B cell (primary cell): ENCODE measurements at regions of chrX and their contacts with region 1.

Region 1: DNA sequence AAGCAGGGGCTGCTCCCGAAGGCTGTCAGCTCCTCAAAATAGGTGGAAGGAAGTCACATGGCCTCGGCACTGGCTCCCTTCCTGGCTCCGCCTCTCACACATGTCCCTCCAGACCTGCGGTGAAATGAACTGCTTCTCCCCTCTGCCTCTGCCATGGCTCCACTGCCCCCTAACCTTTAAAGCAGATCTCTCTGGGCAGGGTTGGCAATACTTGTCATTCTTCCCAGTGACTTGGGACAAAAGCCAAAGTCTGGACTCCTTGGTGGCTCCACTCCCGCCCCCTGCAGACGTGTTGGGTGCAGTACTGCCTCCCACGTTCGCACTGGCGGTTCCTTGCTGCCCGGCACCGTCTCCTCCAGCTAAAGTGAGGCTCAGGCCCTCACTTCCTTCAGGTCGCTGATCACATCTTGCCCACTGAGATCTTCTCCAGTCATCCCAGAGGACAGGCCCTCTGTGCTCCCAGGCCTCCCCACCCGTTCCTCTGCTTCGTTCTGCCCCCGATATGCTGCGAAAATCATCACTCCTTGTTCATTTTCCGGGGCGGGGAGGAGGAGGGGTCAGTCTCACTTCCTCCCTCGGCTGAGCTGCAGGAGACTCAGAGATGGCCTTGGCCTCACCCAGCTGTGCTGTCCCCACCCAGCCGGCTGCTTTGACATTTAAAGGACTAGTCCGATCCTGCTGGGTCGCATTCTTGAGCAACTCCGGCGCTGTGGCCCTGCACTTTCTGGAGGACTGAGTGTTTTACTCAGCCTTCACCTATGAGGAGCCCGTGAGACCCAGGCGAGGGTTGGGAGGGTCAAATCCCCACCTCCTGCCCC is 97.4 kb downstream of the PHKA2 start:
- DNase-seq: peak; percentile 69
- ATAC-seq: peak; percentile 83
- H3K4me3 ChIP-seq: peak overlapping the region; percentile 49 to 65 (median 58)
- H3K4me3 Mint-ChIP-seq: peak overlapping the region; percentile 95
- H3K27ac ChIP-seq: peak overlapping the region; percentile 59 to 75
- H3K27ac Mint-ChIP-seq: peak overlapping the region; percentile 97
- H3K4me1 ChIP-seq: peaks cover 14 to 20% of the 10 kb centered on the region in 2 donors
- H3K4me1 Mint-ChIP-seq: peaks cover 24% of the 10 kb centered on the region
- H3K27me3 ChIP-seq: no peaks in the 10 kb centered on the region
- H3K27me3 Mint-ChIP-seq: no peaks in the 10 kb centered on the region
- CTCF ChIP-seq: peak; percentile 60

Region 2: GRCh38 chrX:18793601-18794089 is 92.9 kb before region 1 on chrX:
- CTCF ChIA-PET with region 1: no interaction called
- POLR2A ChIA-PET with region 1: no interaction called
- intact Hi-C with region 1: no loop called
- DNase-seq: no peak
- ATAC-seq: no peak
- H3K4me3 ChIP-seq: no peak overlapping the region
- H3K4me3 Mint-ChIP-seq: no peak overlapping the region
- H3K27ac ChIP-seq: no peak overlapping the region
- H3K27ac Mint-ChIP-seq: no peak overlapping the region
- H3K4me1 ChIP-seq: no peaks in the 10 kb centered on the region
- H3K4me1 Mint-ChIP-seq: no peaks in the 10 kb centered on the region
- H3K27me3 ChIP-seq: no peaks in the 10 kb centered on the region
- H3K27me3 Mint-ChIP-seq: peaks cover 3% of the 10 kb centered on the region
- CTCF ChIP-seq: no peak

Region 3: DNA sequence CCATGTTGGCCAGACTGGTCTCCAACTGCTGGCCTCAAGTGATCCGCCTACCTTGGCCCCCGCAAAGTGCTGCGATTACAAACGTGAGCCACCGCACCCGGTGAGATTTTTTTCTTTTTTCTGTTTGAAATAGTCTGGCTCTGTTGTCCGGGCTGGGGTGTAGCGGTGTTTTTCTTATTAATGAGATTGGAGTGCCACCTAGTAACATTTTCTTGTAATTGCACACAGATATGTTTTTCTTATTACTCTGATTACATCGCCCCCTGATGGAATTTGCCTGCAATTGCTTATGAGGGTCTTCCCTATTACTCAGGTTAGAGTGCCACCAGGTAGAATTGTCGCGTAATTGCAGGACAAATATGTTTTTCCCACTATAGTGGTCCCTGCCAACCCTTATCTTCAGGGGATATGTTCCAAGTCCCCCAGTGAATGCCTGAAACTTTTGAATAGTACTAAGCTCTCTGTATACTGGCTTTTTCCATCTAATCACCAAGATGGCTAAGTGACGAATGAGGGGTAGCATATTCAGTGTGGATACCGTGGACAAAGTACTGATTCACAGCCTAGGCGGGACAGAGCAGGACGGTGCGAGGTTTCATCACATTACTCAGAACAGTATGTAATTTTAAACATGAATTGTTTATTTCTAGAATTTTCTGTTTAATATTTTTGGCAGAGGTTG is 448.5 kb after region 1 on chrX:
- CTCF ChIA-PET with region 1: interaction called, 3 read pairs
- POLR2A ChIA-PET with region 1: no interaction called
- intact Hi-C with region 1: loop called (anchors 5 kb)
- DNase-seq: peak; percentile 27
- ATAC-seq: no peak
- H3K4me3 ChIP-seq: no peak overlapping the region
- H3K4me3 Mint-ChIP-seq: no peak overlapping the region
- H3K27ac ChIP-seq: no peak overlapping the region
- H3K27ac Mint-ChIP-seq: no peak overlapping the region
- H3K4me1 ChIP-seq: no peaks in the 10 kb centered on the region
- H3K4me1 Mint-ChIP-seq: no peaks in the 10 kb centered on the region
- H3K27me3 ChIP-seq: no peaks in the 10 kb centered on the region
- H3K27me3 Mint-ChIP-seq: no peaks in the 10 kb centered on the region
- CTCF ChIP-seq: peak; percentile 2